Endothelial cell of umbilical vein (primary cell): ENCODE measurements at regions of chr17 and their contacts with region 1.

Region 1: GRCh38 chr17:56715613-56716357 is 117.9 kb downstream of the C17orf67 start:
- DNase-seq: peak; percentile 74
- H3K4me3 ChIP-seq: no peak overlapping the region
- H3K27ac ChIP-seq: no peak overlapping the region
- H3K4me1 ChIP-seq: no peaks in the 10 kb centered on the region
- H3K27me3 ChIP-seq: peaks cover 0 to 2% of the 10 kb centered on the region in 2 experiments
- CTCF ChIP-seq: peak; percentile 75 to 80
- POLR2A ChIP-seq: no peak

Region 2: GRCh38 chr17:55845385-55845784 is 870.4 kb before region 1 on chr17:
- CTCF ChIA-PET with region 1: interaction called, 6 read pairs
- POLR2A ChIA-PET with region 1: no interaction called
- dilution Hi-C with region 1: no loop called
- intact Hi-C with region 1: loop called (anchors 1 kb)
- DNase-seq: peak; percentile 26
- H3K4me3 ChIP-seq: no peak overlapping the region
- H3K27ac ChIP-seq: no peak overlapping the region
- H3K4me1 ChIP-seq: peaks cover 3% of the 10 kb centered on the region
- H3K27me3 ChIP-seq: peaks cover 0 to 4% of the 10 kb centered on the region in 2 experiments
- CTCF ChIP-seq: peak; percentile 63 to 64
- POLR2A ChIP-seq: no peak

Region 3: DNA sequence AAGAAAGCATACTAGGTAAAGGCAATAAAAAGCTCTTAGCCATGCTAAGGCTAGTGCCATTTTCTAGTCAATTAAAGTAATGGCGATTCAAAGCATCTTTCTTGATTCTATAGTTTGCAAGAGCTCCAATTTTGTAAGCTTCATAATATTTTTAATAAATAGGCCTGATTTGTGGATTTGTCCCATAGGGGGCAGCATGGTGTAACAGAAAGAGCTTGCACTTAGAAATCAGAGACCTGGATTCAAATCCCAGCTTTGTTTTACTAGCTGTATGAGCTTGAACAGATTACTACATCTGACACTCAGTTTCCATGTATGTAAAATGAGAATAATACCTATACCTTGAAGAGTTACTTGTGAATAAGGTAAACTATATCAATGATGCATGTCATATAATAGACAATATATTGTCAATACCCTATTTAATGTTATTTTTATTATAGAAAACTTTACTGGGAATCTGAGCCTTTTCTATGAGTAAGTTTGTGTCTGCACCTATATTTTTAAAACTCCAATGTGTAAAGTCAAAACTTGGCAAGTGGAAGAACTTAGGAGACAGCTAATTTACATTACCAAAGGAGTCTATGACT is 215.9 kb before region 1 on chr17:
- CTCF ChIA-PET with region 1: interaction called, 186 read pairs
- POLR2A ChIA-PET with region 1: no interaction called
- dilution Hi-C with region 1: no loop called
- intact Hi-C with region 1: loop called (anchors 1 kb)
- DNase-seq: peak; percentile 47
- H3K4me3 ChIP-seq: no peak overlapping the region
- H3K27ac ChIP-seq: no peak overlapping the region
- H3K4me1 ChIP-seq: no peaks in the 10 kb centered on the region
- H3K27me3 ChIP-seq: peaks cover 2 to 9% of the 10 kb centered on the region in 2 experiments
- CTCF ChIP-seq: peak; percentile 25 to 33
- POLR2A ChIP-seq: no peak

Region 4: GRCh38 chr17:56598466-56599148 is 117.2 kb before region 1 on chr17:
- CTCF ChIA-PET with region 1: interaction called, 473 read pairs
- POLR2A ChIA-PET with region 1: interaction called, 4 read pairs
- dilution Hi-C with region 1: loop called (anchors 25 kb)
- intact Hi-C with region 1: no loop called
- DNase-seq: no peak
- H3K4me3 ChIP-seq: no peak overlapping the region
- H3K27ac ChIP-seq: no peak overlapping the region
- H3K4me1 ChIP-seq: peaks cover 16% of the 10 kb centered on the region
- H3K27me3 ChIP-seq: peaks cover 30 to 42% of the 10 kb centered on the region in 2 experiments
- CTCF ChIP-seq: no peak
- POLR2A ChIP-seq: no peak

Region 5: GRCh38 chr17:56653877-56654276 is 61.9 kb before region 1 on chr17:
- CTCF ChIA-PET with region 1: interaction called, 21 read pairs
- POLR2A ChIA-PET with region 1: no interaction called
- dilution Hi-C with region 1: no loop called
- intact Hi-C with region 1: loop called (anchors 1 kb)
- DNase-seq: peak; percentile 33
- H3K4me3 ChIP-seq: no peak overlapping the region
- H3K27ac ChIP-seq: no peak overlapping the region
- H3K4me1 ChIP-seq: no peaks in the 10 kb centered on the region
- H3K27me3 ChIP-seq: peaks cover under 1 to 8% of the 10 kb centered on the region in 2 experiments
- CTCF ChIP-seq: peak; percentile 27 to 33
- POLR2A ChIP-seq: no peak

Region 6: GRCh38 chr17:56737366-56738161 is 21.8 kb after region 1 on chr17:
- CTCF ChIA-PET with region 1: interaction called, 16 read pairs
- POLR2A ChIA-PET with region 1: no interaction called
- dilution Hi-C with region 1: no loop called
- intact Hi-C with region 1: no loop called
- DNase-seq: no peak
- H3K4me3 ChIP-seq: no peak overlapping the region
- H3K27ac ChIP-seq: no peak overlapping the region
- H3K4me1 ChIP-seq: no peaks in the 10 kb centered on the region
- H3K27me3 ChIP-seq: peaks cover 5% of the 10 kb centered on the region in 2 experiments
- CTCF ChIP-seq: no peak
- POLR2A ChIP-seq: no peak

Region 7: DNA sequence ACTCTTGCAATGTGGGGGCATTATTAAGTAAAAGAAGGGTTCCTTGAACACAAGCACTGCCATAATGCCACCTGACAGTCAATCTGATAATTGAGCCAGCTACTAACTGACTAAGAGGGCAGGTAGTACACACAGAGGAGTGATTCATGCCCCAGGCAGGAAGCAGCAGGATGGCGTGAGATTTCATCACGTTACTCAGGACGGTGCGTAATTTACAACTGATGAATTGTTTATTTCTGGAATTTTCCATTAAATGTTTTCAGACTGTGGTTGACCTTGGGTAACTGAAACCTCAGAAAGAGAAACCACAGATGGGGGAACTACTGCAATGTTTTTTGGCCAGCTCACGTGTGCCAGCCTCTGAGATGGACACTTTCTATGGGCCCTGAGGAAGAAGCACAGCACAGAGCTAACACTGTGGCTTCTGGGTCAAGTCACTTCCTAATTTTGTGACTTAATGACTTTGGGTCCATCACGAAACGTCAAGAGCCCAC is 71.3 kb after region 1 on chr17:
- CTCF ChIA-PET with region 1: interaction called, 141 read pairs
- POLR2A ChIA-PET with region 1: no interaction called
- dilution Hi-C with region 1: no loop called
- intact Hi-C with region 1: no loop called
- DNase-seq: peak; percentile 83
- H3K4me3 ChIP-seq: no peak overlapping the region
- H3K27ac ChIP-seq: peak overlapping the region; percentile 63
- H3K4me1 ChIP-seq: peaks cover 13% of the 10 kb centered on the region
- H3K27me3 ChIP-seq: no peaks in the 10 kb centered on the region
- CTCF ChIP-seq: no peak
- POLR2A ChIP-seq: no peak

Region 8: GRCh38 chr17:56966338-56966737 is 250.6 kb after region 1 on chr17:
- CTCF ChIA-PET with region 1: no interaction called
- POLR2A ChIA-PET with region 1: no interaction called
- dilution Hi-C with region 1: no loop called
- intact Hi-C with region 1: no loop called
- DNase-seq: no peak
- H3K4me3 ChIP-seq: no peak overlapping the region
- H3K27ac ChIP-seq: no peak overlapping the region
- H3K4me1 ChIP-seq: no peaks in the 10 kb centered on the region
- H3K27me3 ChIP-seq: no peaks in the 10 kb centered on the region
- CTCF ChIP-seq: no peak
- POLR2A ChIP-seq: no peak